GM23248 (cell line): ENCODE measurements at regions of chr5 and their contacts with region 1.

Region 1: GRCh38 chr5:96595300-96596090 is 66.7 kb upstream of the CAST start:
- DNase-seq: no peak
- H3K4me3 ChIP-seq: no peak overlapping the region
- H3K27ac ChIP-seq: no peak overlapping the region
- H3K4me1 ChIP-seq: peaks cover 7% of the 10 kb centered on the region
- H3K27me3 ChIP-seq: no peaks in the 10 kb centered on the region

Region 2: GRCh38 chr5:96344678-96345577 is 250.6 kb before region 1 on chr5:
- in situ Hi-C with region 1: loop called (anchors 5 kb)
- DNase-seq: peak; percentile 86
- H3K4me3 ChIP-seq: no peak overlapping the region
- H3K27ac ChIP-seq: no peak overlapping the region
- H3K4me1 ChIP-seq: peaks cover 38% of the 10 kb centered on the region
- H3K27me3 ChIP-seq: no peaks in the 10 kb centered on the region